ENCODE measurements at regions of chr4 and their contacts with region 1.

Region 1: GRCh38 chr4:83606898-83607297 is 71.0 kb downstream of the GPAT3 start:
- DNase-seq: no peak
- H3K4me3 ChIP-seq: no peak overlapping the region
- H3K27ac ChIP-seq: no peak overlapping the region
- H3K4me1 ChIP-seq: no peaks in the 10 kb centered on the region
- H3K27me3 ChIP-seq: no peaks in the 10 kb centered on the region
- CTCF ChIP-seq: no peak

Region 2: GRCh38 chr4:83473423-83473822 is 133.5 kb before region 1 on chr4:
- CTCF ChIA-PET with region 1: interaction called, 10 read pairs
- dilution Hi-C with region 1: no loop called
- in situ Hi-C with region 1: no loop called
- intact Hi-C with region 1: no loop called
- DNase-seq: no peak
- H3K4me3 ChIP-seq: no peak overlapping the region
- H3K27ac ChIP-seq: no peak overlapping the region
- H3K4me1 ChIP-seq: no peaks in the 10 kb centered on the region
- H3K27me3 ChIP-seq: no peaks in the 10 kb centered on the region
- CTCF ChIP-seq: no peak

Region 3: GRCh38 chr4:83793481-83793880 is 186.6 kb after region 1 on chr4:
- CTCF ChIA-PET with region 1: no interaction called
- dilution Hi-C with region 1: no loop called
- in situ Hi-C with region 1: no loop called
- intact Hi-C with region 1: no loop called
- DNase-seq: no peak
- H3K4me3 ChIP-seq: no peak overlapping the region
- H3K27ac ChIP-seq: no peak overlapping the region
- H3K4me1 ChIP-seq: no peaks in the 10 kb centered on the region
- H3K27me3 ChIP-seq: peaks cover 6% of the 10 kb centered on the region
- CTCF ChIP-seq: no peak